Gastrocnemius medialis (tissue), 4 donors: ENCODE measurements at regions of chr2 and their contacts with region 1.

Region 1: DNA sequence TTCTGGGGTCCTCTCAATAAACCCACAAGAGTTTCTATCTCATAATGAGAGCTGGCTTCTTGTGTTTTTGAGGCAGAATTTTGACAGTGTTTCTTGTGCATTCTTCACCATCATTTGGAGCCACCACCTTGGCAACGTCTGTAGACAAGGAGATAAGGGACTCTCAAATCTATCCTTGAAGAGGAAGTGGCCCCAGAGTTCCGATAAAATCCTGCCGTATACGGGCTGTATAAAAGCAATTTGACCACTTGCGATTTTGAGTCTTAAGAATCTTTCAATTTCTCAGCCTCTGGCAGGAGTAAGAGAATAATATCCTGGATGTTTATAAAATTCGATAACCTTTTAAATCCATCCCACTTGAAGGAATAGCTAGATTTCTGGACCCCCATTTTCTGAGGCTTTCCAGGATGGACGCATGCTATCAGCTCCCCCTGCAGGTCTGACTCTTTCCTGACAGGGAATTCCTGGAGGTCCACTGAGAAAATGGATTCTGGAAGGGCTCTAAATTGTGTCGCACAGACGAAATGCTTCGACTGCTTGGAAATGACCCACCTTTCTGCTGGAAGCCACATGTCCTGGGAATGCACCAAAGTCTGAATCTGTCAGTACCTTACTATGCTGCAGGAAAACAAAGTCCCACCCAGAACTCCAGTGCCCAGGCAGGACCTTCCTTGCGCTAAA is 54.1 kb downstream of the E2F6 start:
- DNase-seq: peak; percentile 20 to 33
- ATAC-seq: peak in 1 of 2 donors; percentile 60
- H3K4me3 ChIP-seq: peak overlapping the region; percentile 32 to 62 (median 37)
- H3K27ac ChIP-seq: no peak overlapping the region
- H3K4me1 ChIP-seq: peaks cover 12 to 29% of the 10 kb centered on the region in 2 donors
- H3K27me3 ChIP-seq: no peaks in the 10 kb centered on the region
- CTCF ChIP-seq: peak; percentile 78 to 87 (median 81)
- POLR2A ChIP-seq: no peak

Region 2: GRCh38 chr2:11124503-11125068 is 287.3 kb before region 1 on chr2:
- in situ Hi-C with region 1: loop called in 2 of 4 experiments (anchors 25 kb)
- intact Hi-C with region 1: no loop called
- DNase-seq: peak in 1 of 2 donors; percentile 43
- ATAC-seq: peak in 1 of 2 donors; percentile 48
- H3K4me3 ChIP-seq: no peak overlapping the region
- H3K27ac ChIP-seq: no peak overlapping the region
- H3K4me1 ChIP-seq: no peaks in the 10 kb centered on the region
- H3K27me3 ChIP-seq: no peaks in the 10 kb centered on the region
- CTCF ChIP-seq: peak; percentile 49 to 75 (median 63)
- POLR2A ChIP-seq: no peak

Region 3: GRCh38 chr2:11234309-11234708 is 177.6 kb before region 1 on chr2:
- in situ Hi-C with region 1: loop called (anchors 5 to 10 kb)
- intact Hi-C with region 1: loop called (anchors 1 kb)
- DNase-seq: no peak
- ATAC-seq: peak; percentile 28 to 47
- H3K4me3 ChIP-seq: no peak overlapping the region
- H3K27ac ChIP-seq: peak overlapping the region in 1 of 4 donors; percentile 48
- H3K4me1 ChIP-seq: peaks cover 24 to 33% of the 10 kb centered on the region in 2 donors
- H3K27me3 ChIP-seq: no peaks in the 10 kb centered on the region
- CTCF ChIP-seq: peak; percentile 46 to 60 (median 57)
- POLR2A ChIP-seq: no peak

Region 4: GRCh38 chr2:11239666-11240462 is 172.0 kb before region 1 on chr2:
- in situ Hi-C with region 1: loop called (anchors 5 to 10 kb)
- intact Hi-C with region 1: loop called (anchors 1 kb)
- DNase-seq: no peak
- ATAC-seq: no peak
- H3K4me3 ChIP-seq: no peak overlapping the region
- H3K27ac ChIP-seq: peak overlapping the region; percentile 19 to 32 (median 26)
- H3K4me1 ChIP-seq: peaks cover 15 to 19% of the 10 kb centered on the region in 2 donors
- H3K27me3 ChIP-seq: no peaks in the 10 kb centered on the region
- CTCF ChIP-seq: no peak
- POLR2A ChIP-seq: no peak

Region 5: GRCh38 chr2:11344342-11344955 is 67.5 kb before region 1 on chr2 and contains the start of gene ROCK2:
- in situ Hi-C with region 1: loop called in 1 of 4 experiments (anchors 10 kb)
- intact Hi-C with region 1: loop called (anchors 2 kb)
- DNase-seq: peak; percentile 77 to 85
- ATAC-seq: peak; percentile 70 to 76
- H3K4me3 ChIP-seq: peak within 1 kb of the TSS; percentile 89 to 93 (median 90)
- H3K27ac ChIP-seq: peak within 1 kb of the TSS; percentile 97 to 99 (median 98)
- H3K4me1 ChIP-seq: peaks cover 40% of the 10 kb centered on the region in 2 donors
- H3K27me3 ChIP-seq: no peaks in the 10 kb centered on the region
- CTCF ChIP-seq: peak in 1 of 5 experiments; percentile 6
- POLR2A ChIP-seq: peak; percentile 91 to 94
- total RNA-seq, gene ROCK2: 42.0 to 85.4 (median 70.7) TPM